CD14-positive monocyte (primary cell): ENCODE measurements at regions of chr7 and their contacts with region 1.

Region 1: GRCh38 chr7:101542527-101543241 is 86.4 kb downstream of the MYL10 start:
- DNase-seq: peak; percentile 25 to 43 (median 40)
- H3K4me3 ChIP-seq: no peak overlapping the region
- H3K4me3 Mint-ChIP-seq: no peak overlapping the region
- H3K27ac ChIP-seq: no peak overlapping the region
- H3K27ac Mint-ChIP-seq: no peak overlapping the region
- H3K4me1 ChIP-seq: no peaks in the 10 kb centered on the region
- H3K4me1 Mint-ChIP-seq: no peaks in the 10 kb centered on the region
- H3K27me3 ChIP-seq: no peaks in the 10 kb centered on the region
- H3K27me3 Mint-ChIP-seq: peaks cover 0 to 5% (median 3%) of the 10 kb centered on the region in 3 donors
- CTCF ChIP-seq: peak; percentile 95

Region 2: GRCh38 chr7:102272075-102272917 is 729.6 kb after region 1 on chr7:
- intact Hi-C with region 1: loop called (anchors 1 kb)
- DNase-seq: peak; percentile 52 to 65 (median 60)
- H3K4me3 ChIP-seq: no peak overlapping the region
- H3K4me3 Mint-ChIP-seq: no peak overlapping the region
- H3K27ac ChIP-seq: no peak overlapping the region
- H3K27ac Mint-ChIP-seq: no peak overlapping the region
- H3K4me1 ChIP-seq: no peaks in the 10 kb centered on the region
- H3K4me1 Mint-ChIP-seq: peaks cover 2% of the 10 kb centered on the region
- H3K27me3 ChIP-seq: no peaks in the 10 kb centered on the region
- H3K27me3 Mint-ChIP-seq: peaks cover 0 to 4% (median 2%) of the 10 kb centered on the region in 3 donors
- CTCF ChIP-seq: peak; percentile 95